CD4-positive, alpha-beta memory T cell (primary cell): ENCODE measurements at regions of chr2 and their contacts with region 1.

Region 1: GRCh38 chr2:33475224-33476130 is 972 bp upstream of the RASGRP3 start:
- DNase-seq: peak; percentile 84 to 89 (median 87)
- H3K4me3 ChIP-seq: peak overlapping the region; percentile 91 to 94
- H3K4me3 Mint-ChIP-seq: peak overlapping the region; percentile 93 to 99 (median 96)
- H3K27ac ChIP-seq: peak overlapping the region; percentile 76
- H3K27ac Mint-ChIP-seq: peak overlapping the region; percentile 96 to 100 (median 98)
- H3K4me1 ChIP-seq: peaks cover 25% of the 10 kb centered on the region
- H3K4me1 Mint-ChIP-seq: peaks cover 19 to 53% (median 31%) of the 10 kb centered on the region in 4 donors
- H3K27me3 ChIP-seq: no peaks in the 10 kb centered on the region
- H3K27me3 Mint-ChIP-seq: no peaks in the 10 kb centered on the region

Region 2: DNA sequence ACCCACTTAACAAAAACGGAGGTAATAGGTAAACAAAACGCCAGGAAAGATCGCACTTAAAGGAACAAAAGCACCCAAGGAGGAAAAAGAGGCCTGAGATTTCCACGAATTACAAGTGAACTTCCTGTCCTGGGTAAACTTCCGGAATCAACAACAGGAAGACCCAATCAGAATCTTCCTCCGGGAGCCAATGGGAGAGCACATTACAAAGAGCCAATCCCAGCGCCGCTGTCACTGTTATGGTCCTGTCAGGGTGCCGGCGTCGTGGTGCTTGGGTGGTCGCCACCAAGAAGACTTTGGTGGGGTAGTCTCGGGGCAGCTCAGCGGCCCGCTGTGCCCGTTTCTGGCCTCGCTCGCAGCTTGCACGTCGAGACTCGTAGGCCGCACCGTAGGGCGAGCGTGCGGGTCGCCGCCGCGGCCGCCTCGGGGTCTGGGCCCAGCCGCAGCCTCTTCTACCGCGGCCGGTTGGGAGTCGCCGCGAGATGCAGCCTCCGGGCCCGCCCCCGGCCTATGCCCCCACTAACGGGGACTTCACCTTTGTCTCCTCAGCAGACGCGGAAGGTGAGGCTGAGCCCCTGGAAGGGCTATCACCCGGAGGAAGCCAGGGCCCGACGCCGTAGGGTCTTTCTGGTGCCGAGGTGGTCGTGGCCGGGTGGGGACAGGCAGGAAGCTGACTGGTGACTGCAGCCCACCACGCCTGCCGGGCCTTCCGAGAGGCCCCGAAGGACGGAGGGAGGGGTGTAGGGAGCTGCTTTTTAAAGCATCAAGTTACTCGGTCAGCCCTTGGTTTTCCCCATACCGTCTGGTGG is 1197.6 kb before region 1 on chr2 and contains the start of gene YIPF4:
- CTCF ChIA-PET with region 1: no interaction called
- POLR2A ChIA-PET with region 1: no interaction called
- intact Hi-C with region 1: loop called (anchors 5 kb)
- DNase-seq: peak; percentile 88 to 92 (median 90)
- H3K4me3 ChIP-seq: peak within 1 kb of the TSS; percentile 90 to 98
- H3K4me3 Mint-ChIP-seq: peak within 1 kb of the TSS; percentile 90 to 97 (median 96)
- H3K27ac ChIP-seq: peak within 1 kb of the TSS; percentile 72
- H3K27ac Mint-ChIP-seq: peak within 1 kb of the TSS; percentile 96 to 99 (median 97)
- H3K4me1 ChIP-seq: peaks cover 43% of the 10 kb centered on the region
- H3K4me1 Mint-ChIP-seq: peaks cover 11 to 45% (median 32%) of the 10 kb centered on the region in 4 donors
- H3K27me3 ChIP-seq: no peaks in the 10 kb centered on the region
- H3K27me3 Mint-ChIP-seq: peaks cover 0 to 1% of the 10 kb centered on the region in 2 donors
- total RNA-seq, gene YIPF4: 46.1 to 51.9 TPM

Region 3: DNA sequence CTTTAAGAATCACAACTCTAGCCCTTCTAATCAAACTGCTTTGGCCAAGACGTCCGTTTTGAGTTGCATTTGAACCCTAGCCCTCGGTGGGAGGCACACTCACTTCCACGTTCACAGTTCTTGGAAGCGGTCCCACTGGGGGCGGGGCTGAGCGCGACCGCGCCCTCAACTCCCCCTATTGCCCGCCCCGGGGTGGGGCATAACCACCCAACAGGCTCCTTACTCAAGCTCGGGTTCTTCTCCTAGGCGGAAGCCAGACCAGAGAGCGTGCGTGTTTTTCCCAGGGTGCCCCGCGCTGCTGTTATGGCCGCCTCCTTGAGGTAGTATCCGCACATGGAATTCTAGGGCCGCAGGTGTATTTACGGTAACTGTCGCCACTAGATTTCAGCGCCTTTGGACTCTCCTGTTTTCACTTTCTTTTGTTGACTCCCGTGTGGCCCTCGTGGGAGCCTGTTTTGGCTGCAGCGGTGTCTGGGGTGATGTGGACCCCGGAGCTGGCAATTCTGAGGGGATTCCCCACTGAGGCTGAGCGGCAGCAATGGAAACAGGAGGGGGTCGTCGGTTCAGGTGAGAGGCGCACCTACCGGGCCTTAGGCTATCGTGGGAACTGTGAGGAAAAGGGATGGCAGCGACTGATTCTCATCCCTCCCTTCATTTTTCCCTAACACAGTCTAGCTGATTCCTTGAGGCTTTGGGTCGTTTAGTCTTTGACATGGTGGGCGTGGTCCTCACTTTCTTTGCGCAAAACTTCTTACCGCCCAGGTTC is 847.5 kb before region 1 on chr2 and contains the start of gene TTC27:
- CTCF ChIA-PET with region 1: no interaction called
- POLR2A ChIA-PET with region 1: interaction called, 3 read pairs
- intact Hi-C with region 1: loop called (anchors 2 kb)
- DNase-seq: peak; percentile 94 to 98 (median 95)
- H3K4me3 ChIP-seq: peak within 1 kb of the TSS; percentile 66 to 77
- H3K4me3 Mint-ChIP-seq: peak within 1 kb of the TSS; percentile 91 to 97 (median 95)
- H3K27ac ChIP-seq: peak within 1 kb of the TSS; percentile 65
- H3K27ac Mint-ChIP-seq: peak within 1 kb of the TSS; percentile 81 to 98 (median 94)
- H3K4me1 ChIP-seq: peaks cover 11% of the 10 kb centered on the region
- H3K4me1 Mint-ChIP-seq: peaks cover 15 to 46% (median 29%) of the 10 kb centered on the region in 4 donors
- H3K27me3 ChIP-seq: no peaks in the 10 kb centered on the region
- H3K27me3 Mint-ChIP-seq: no peaks in the 10 kb centered on the region
- total RNA-seq, gene TTC27: 20.9 to 27.5 TPM

Region 4: DNA sequence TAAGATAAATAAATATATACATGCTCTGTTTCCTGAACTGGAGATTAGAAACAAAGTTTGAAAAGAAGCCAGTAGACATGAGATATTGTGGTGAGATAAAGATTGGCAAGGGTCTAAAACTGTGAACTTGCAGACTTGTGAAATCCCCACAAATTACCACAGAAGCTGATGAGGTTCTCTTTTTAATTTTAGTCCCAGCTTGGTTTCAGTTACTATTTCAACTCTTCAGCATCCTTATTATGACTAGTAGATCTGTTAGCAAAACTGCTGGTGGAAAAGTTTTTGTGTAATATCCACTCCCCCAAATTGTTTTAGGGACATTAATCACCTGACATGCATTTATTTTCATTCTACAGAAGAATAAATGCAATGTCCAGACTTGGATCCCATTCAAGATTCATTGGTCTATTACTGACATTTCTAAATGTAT is 21.8 kb after region 1 on chr2:
- CTCF ChIA-PET with region 1: interaction called, 9 read pairs
- POLR2A ChIA-PET with region 1: interaction called, 16 read pairs
- intact Hi-C with region 1: loop called (anchors 1 kb)
- DNase-seq: peak in 4 of 5 donors; percentile 43 to 61 (median 48)
- H3K4me3 ChIP-seq: no peak overlapping the region
- H3K4me3 Mint-ChIP-seq: peak overlapping the region in 5 of 8 donors; percentile 19 to 44 (median 33)
- H3K27ac ChIP-seq: no peak overlapping the region
- H3K27ac Mint-ChIP-seq: peak overlapping the region in 6 of 7 donors; percentile 6 to 72 (median 36)
- H3K4me1 ChIP-seq: peaks cover 29% of the 10 kb centered on the region
- H3K4me1 Mint-ChIP-seq: peaks cover 26 to 56% (median 32%) of the 10 kb centered on the region in 4 donors
- H3K27me3 ChIP-seq: no peaks in the 10 kb centered on the region
- H3K27me3 Mint-ChIP-seq: no peaks in the 10 kb centered on the region

Region 5: DNA sequence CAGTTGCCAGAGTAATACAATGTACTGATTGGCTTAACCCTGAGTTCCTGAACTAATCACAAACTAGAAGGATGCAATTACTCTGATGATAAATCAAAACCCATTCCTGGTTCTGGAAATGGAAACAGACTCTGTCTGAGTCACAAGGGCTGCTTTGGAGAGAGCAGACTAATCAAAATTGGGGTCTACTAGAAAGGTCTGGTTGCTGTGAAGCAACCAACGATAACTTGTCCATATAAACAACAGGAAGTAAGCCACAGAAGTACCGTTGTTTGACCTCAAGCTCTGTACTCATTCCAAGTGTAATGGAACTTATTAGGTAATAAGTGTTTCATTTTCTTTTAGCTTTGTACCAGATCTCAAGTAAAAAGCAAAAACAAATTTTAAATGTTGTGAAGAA is 50.7 kb after region 1 on chr2:
- CTCF ChIA-PET with region 1: no interaction called
- POLR2A ChIA-PET with region 1: no interaction called
- intact Hi-C with region 1: no loop called
- DNase-seq: no peak
- H3K4me3 ChIP-seq: no peak overlapping the region
- H3K4me3 Mint-ChIP-seq: no peak overlapping the region
- H3K27ac ChIP-seq: no peak overlapping the region
- H3K27ac Mint-ChIP-seq: no peak overlapping the region
- H3K4me1 ChIP-seq: no peaks in the 10 kb centered on the region
- H3K4me1 Mint-ChIP-seq: peaks cover 0 to 1% (median 0%) of the 10 kb centered on the region in 4 donors
- H3K27me3 ChIP-seq: no peaks in the 10 kb centered on the region
- H3K27me3 Mint-ChIP-seq: no peaks in the 10 kb centered on the region

Region 6: DNA sequence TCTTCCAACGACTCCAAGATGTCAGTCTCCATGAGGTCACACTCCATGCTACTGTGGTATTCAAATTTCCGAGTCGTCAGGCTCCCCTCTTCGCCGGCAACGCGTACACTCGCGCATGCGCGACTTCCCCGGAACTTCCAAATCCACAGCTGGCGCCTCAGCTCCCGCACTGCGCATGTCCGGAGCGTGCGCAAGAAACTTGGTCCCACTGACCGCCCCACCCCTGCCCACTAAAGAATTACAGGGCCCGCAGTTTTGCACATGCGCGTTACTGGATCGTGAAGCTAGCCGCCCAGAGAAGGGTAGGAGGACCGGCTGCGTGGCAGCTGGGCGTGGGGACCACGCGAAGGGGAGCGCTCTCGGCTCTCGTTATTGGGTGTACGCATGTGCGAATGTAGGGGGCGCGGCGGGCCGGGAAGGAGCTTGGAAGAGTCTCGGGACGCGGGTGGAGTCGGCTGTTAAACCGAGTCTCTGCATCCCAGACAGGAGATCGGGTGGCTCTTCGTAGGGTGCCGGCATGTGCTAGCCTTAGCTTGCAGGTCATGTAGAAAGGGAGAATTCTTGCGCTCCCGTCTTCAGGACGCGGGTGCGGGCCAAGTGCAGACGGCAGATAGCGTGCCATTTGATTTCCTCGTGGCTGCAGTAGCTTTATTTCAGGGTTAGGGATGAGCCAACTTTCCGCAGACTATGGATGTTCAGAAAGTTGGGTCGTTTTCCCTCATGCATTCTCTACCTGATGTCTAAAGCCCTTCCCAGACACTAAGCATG is 123.9 kb after region 1 on chr2 and contains the start of gene FAM98A:
- CTCF ChIA-PET with region 1: interaction called, 30 read pairs
- POLR2A ChIA-PET with region 1: interaction called, 50 read pairs
- intact Hi-C with region 1: loop called (anchors 1 kb)
- DNase-seq: peak; percentile 98 to 99 (median 99)
- H3K4me3 ChIP-seq: peak within 1 kb of the TSS; percentile 63 to 96
- H3K4me3 Mint-ChIP-seq: peak within 1 kb of the TSS; percentile 94 to 100 (median 98)
- H3K27ac ChIP-seq: peak within 1 kb of the TSS; percentile 80
- H3K27ac Mint-ChIP-seq: peak within 1 kb of the TSS; percentile 90 to 99 (median 97)
- H3K4me1 ChIP-seq: peaks cover 32% of the 10 kb centered on the region
- H3K4me1 Mint-ChIP-seq: peaks cover 23 to 44% (median 35%) of the 10 kb centered on the region in 4 donors
- H3K27me3 ChIP-seq: no peaks in the 10 kb centered on the region
- H3K27me3 Mint-ChIP-seq: no peaks in the 10 kb centered on the region
- total RNA-seq, gene FAM98A: 32.7 to 38.2 TPM

Region 7: DNA sequence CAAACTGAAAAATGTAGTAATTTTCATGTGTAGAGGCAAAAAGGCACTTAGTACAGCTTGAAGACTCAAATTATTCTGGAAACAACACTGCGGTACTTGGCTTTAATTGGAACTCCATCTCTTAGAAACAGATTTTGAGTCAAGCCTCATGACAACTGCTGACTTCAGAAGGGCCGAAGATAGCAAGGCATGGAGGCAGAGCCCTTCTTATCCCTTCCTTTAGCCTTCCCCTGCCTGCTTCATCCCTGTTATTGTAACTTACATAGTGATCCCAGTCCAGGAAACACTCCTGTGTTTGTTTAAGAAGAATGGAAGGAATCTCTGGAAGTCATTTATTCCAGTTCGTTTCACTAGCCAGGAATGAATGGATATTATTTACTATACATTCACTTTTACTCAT is 234.5 kb after region 1 on chr2:
- CTCF ChIA-PET with region 1: no interaction called
- POLR2A ChIA-PET with region 1: no interaction called
- intact Hi-C with region 1: no loop called
- DNase-seq: no peak
- H3K4me3 ChIP-seq: no peak overlapping the region
- H3K4me3 Mint-ChIP-seq: no peak overlapping the region
- H3K27ac ChIP-seq: no peak overlapping the region
- H3K27ac Mint-ChIP-seq: no peak overlapping the region
- H3K4me1 ChIP-seq: no peaks in the 10 kb centered on the region
- H3K4me1 Mint-ChIP-seq: no peaks in the 10 kb centered on the region
- H3K27me3 ChIP-seq: no peaks in the 10 kb centered on the region
- H3K27me3 Mint-ChIP-seq: peaks cover 0 to 1% of the 10 kb centered on the region in 2 donors